ENCODE measurements at regions of chr3 and their contacts with region 1.

Region 1: DNA sequence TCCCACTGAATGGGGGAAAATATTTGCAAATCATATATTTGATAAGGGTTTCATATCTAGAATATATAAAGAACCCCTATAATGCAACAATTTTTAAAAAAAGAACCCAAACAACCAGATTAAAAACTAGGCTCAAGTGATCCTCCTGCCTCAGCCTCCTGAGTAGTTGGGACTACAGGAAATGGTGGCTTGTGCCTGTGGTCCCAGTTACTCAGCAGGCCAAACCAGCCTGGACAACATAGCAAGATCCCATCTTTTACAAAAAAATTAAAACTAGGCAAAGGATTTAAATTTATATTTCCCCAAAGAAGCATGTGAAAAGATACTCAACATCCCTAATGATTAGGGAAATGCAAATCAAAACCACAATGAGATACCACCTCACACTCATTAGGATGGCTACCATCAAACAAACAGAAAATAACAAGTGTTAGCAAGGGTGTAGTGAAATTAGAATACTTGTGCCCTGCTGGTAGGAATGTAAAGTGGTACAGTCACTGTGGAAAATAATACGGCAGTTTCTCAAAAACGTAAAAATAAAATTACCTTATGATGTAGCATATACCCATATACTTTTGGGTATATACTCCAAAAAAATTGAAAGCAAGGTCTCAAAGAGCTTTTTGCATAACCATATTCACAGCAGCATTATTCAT is 19.7 kb downstream of the TFDP2 start:
- DNase-seq: no peak
- ATAC-seq: no peak
- H3K4me3 ChIP-seq: no peak overlapping the region
- H3K27ac ChIP-seq: no peak overlapping the region
- H3K4me1 ChIP-seq: no peaks in the 10 kb centered on the region
- H3K27me3 ChIP-seq: no peaks in the 10 kb centered on the region
- CTCF ChIP-seq: no peak
- EP300 ChIP-seq: no peak
- POLR2A ChIP-seq: no peak
- RAD21 ChIP-seq: no peak

Region 2: GRCh38 chr3:141959921-141960554 is 169.6 kb before region 1 on chr3:
- CTCF ChIA-PET with region 1: no interaction called
- POLR2A ChIA-PET with region 1: no interaction called
- in situ Hi-C with region 1: no loop called
- intact Hi-C with region 1: loop called (anchors 2 kb)
- DNase-seq: no peak
- ATAC-seq: no peak
- H3K4me3 ChIP-seq: no peak overlapping the region
- H3K27ac ChIP-seq: no peak overlapping the region
- H3K4me1 ChIP-seq: no peaks in the 10 kb centered on the region
- H3K27me3 ChIP-seq: no peaks in the 10 kb centered on the region
- CTCF ChIP-seq: no peak
- EP300 ChIP-seq: no peak
- POLR2A ChIP-seq: no peak
- RAD21 ChIP-seq: no peak

Region 3: DNA sequence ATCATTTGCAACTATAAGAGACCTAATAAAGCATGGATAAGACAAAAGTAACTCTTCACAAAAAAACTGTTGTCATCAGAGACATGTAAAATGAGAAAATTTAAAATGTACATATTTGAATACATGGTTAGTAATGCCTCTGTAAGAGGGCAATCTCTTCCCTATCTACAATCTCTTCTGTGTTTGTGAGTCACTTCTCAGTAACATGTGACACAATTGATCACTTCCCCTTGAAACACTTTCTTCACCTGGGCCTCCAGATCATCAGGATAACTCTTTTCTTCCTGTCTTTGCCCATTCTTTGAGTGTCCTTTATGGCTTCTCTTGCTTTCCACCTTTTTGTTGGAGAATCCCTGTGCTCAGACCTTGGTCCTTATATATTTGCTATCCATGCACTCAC is 30.7 kb before region 1 on chr3:
- CTCF ChIA-PET with region 1: no interaction called
- POLR2A ChIA-PET with region 1: no interaction called
- in situ Hi-C with region 1: no loop called
- intact Hi-C with region 1: no loop called
- DNase-seq: peak; percentile 16 to 39 (median 21)
- ATAC-seq: peak; percentile 74
- H3K4me3 ChIP-seq: no peak overlapping the region
- H3K27ac ChIP-seq: no peak overlapping the region
- H3K4me1 ChIP-seq: peaks cover 0 to 5% of the 10 kb centered on the region in 2 experiments; a peak in 3 of 5 replicates
- H3K27me3 ChIP-seq: no peaks in the 10 kb centered on the region
- CTCF ChIP-seq: no peak
- EP300 ChIP-seq: peak; percentile 65
- POLR2A ChIP-seq: no peak
- RAD21 ChIP-seq: no peak

Measured in K562 (cell line).